Ovary (tissue), 10 donors: ENCODE measurements at regions of chr3 and their contacts with region 1.

Region 1: GRCh38 chr3:66047311-66048050 is 8.8 kb upstream of the MAGI1 start:
- DNase-seq: peak in 4 of 5 donors; percentile 20 to 42 (median 22)
- H3K4me3 ChIP-seq: no peak overlapping the region
- H3K27ac ChIP-seq: no peak overlapping the region
- H3K4me1 ChIP-seq: peaks cover 1% of the 10 kb centered on the region
- H3K27me3 ChIP-seq: no peaks in the 10 kb centered on the region
- CTCF ChIP-seq: no peak
- EP300 ChIP-seq: no peak
- POLR2A ChIP-seq: no peak

Region 2: DNA sequence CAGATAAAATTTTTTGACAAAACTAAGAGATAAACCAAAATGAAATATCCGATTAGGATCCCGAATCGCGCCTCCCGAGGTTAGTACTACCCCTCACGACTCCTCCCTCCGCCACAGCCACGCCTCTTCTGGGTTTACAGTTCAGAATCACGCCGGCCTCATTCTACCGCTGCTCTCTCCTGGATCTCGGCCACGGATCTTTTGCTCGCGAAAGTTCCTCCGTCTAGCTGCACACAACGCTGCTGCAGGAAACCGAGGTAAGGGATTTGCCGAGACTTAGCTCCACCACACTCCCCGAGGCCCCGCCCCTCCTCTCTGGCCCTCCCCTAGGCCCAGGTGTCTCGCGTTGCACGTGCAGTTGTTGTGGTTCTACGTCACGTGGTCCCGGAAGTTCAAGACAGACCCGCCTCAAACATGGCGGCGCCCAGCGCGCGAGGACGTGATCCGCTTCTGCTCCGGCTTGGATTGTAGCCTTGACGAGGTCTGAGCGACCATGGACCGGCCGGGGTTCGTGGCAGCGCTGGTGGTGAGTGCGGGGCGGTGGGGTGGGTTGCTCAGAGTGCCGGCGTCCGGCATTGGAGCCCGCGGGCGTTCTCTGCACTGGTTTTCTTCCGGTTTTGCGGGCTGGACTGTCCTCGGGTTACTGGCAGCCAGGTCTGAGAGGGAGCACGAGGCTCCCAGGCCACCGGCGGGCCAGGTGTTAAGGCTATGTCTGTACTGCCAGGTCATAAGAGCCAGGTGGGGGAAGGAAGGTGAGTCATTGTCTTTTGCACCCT is 173.3 kb after region 1 on chr3 and contains the start of gene SLC25A26:
- intact Hi-C with region 1: loop called in 1 of 4 experiments (anchors 10 kb)
- DNase-seq: peak; percentile 94 to 96 (median 95)
- H3K4me3 ChIP-seq: peak within 1 kb of the TSS; percentile 58
- H3K27ac ChIP-seq: peak within 1 kb of the TSS; percentile 33 to 66
- H3K4me1 ChIP-seq: peaks cover 3% of the 10 kb centered on the region
- H3K27me3 ChIP-seq: no peaks in the 10 kb centered on the region
- CTCF ChIP-seq: no peak
- EP300 ChIP-seq: no peak
- POLR2A ChIP-seq: no peak
- total RNA-seq, gene SLC25A26: 17.3 to 32.3 (median 22.6) TPM